CD14-positive monocyte (primary cell): ENCODE measurements at regions of chr17 and their contacts with region 1.

Region 1: DNA sequence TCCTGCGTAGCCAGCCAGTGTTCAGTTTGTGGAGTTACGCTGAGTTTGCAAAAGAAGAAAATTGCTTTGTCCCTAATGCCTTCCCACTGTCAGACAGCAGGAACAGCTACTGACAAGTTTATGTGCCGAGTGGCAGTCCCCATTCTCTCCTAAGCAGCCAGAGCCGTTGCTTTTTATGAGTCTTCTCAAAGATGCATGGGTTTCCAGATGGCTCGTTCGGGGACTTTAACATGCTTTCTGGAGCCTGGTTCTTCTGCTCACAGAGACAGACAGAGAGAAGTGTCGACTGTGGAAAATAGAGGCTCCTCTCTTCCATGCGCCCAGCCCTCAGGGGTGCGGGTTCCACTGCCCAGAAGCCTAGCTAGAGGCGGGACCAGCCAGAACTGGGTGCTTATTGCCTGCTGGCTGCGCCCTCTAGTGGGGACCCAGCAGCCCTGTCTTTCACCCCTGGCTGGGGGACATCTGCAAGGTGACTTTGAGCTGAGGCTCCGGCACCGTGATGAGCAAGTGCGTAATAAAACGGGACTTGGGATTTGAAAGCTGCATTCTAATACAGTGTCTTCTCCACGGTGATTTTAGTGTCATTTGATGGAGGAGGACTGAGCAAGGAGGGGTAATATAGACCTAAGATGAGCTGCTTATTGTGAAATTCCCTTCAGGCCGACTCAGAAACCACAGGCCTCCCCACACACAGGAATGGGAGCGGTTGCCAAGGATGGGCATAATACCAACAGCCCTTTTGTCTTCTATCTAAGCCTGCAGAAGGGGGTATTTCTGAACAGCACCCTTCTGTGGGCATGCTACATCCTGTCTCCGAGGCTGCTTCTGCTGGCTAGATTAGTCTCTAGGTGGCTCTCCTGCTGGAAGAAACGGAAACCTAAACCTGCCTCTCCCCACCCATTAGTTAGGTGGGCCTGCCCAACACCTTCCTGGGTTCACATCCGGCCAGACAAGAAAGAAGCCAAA is 73.1 kb downstream of the CCDC182 start:
- DNase-seq: peak; percentile 42 to 72 (median 65)
- H3K4me3 ChIP-seq: no peak overlapping the region
- H3K4me3 Mint-ChIP-seq: peak overlapping the region in 1 of 2 donors; percentile 60
- H3K27ac ChIP-seq: no peak overlapping the region
- H3K27ac Mint-ChIP-seq: no peak overlapping the region
- H3K4me1 ChIP-seq: peaks cover 6 to 10% of the 10 kb centered on the region in 2 donors
- H3K4me1 Mint-ChIP-seq: peaks cover 11% of the 10 kb centered on the region
- H3K27me3 ChIP-seq: no peaks in the 10 kb centered on the region
- H3K27me3 Mint-ChIP-seq: peaks cover 0 to 2% (median 0%) of the 10 kb centered on the region in 3 donors
- CTCF ChIP-seq: peak; percentile 94

Region 2: DNA sequence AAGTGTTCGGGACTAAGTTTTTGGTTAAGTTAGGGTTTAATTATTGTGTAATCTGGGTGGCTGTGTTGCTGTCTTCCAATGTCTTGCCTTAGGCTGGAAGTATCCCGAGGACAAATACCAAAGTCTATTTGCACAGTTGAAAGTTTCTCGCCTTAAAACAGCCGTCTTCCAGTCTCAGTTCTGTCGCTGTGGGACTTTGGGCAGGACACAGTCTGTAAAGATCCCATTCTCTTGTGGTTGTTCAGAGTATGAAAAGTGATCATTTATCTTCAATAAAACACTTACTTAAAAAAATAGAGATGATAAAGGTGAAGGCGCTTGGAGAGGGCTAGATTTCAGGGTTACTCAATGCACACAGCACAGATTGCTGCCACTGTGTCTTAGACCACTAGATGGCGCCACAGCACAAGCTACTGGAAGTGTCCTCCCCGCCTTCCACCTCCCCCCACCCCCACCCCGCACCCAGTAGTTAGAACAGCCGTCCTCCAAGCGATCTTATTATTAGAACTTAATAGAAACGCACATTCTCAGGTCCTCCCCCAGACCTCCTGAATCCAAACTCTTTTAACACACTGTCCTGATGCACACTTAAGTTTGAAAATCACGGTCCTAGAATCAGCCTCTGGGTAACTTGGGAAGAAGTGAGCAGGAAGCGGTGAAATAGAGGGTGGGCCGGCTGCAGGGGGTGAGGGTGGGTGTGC is 541.0 kb before region 1 on chr17:
- intact Hi-C with region 1: loop called in 1 of 2 experiments (anchors 10 kb)
- DNase-seq: peak; percentile 66 to 79 (median 76)
- H3K4me3 ChIP-seq: no peak overlapping the region
- H3K4me3 Mint-ChIP-seq: peak overlapping the region in 1 of 2 donors; percentile 26
- H3K27ac ChIP-seq: no peak overlapping the region
- H3K27ac Mint-ChIP-seq: peak overlapping the region in 1 of 7 donors; percentile 12
- H3K4me1 ChIP-seq: peaks cover 0 to 2% of the 10 kb centered on the region in 2 donors
- H3K4me1 Mint-ChIP-seq: peaks cover 6% of the 10 kb centered on the region
- H3K27me3 ChIP-seq: no peaks in the 10 kb centered on the region
- H3K27me3 Mint-ChIP-seq: peaks cover 3 to 11% (median 5%) of the 10 kb centered on the region in 3 donors
- CTCF ChIP-seq: peak; percentile 80

Region 3: DNA sequence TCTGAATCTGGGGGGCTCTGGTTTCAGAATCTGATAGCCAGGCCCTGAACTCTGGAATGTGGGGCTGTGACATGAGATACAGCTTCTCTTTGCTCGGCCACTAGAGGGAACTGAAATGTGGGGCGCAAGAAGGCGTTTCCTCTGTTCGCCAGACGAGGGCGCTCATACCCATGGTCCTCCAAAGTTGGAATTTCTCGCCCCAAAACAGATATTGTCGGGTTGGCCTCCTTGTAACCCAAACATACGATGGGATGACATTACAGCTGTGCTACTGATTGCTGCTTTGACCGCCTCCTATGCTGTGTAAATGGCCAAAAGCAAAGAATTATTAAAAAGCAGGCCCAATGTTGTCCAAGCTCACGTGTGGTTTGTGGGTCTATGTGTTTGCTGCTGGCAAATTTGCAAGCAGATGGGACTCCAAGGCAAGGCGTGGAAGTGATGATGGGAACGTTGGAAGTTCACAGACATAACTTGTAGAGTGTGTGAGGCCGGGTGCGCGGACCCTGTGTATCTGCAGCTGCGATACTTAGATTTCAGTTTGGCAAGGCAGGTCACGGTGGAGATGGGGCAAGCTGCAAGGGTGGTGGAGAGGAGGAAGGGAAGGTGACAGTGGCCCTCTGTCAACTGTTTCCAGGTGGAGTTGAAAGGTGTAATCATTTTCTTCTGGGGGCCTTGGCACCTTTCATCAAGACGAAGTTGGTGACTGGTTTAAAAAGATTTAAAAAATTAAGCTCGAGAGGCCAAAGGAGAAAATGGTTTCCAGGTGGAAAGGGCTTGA is 428.6 kb before region 1 on chr17:
- intact Hi-C with region 1: loop called in 1 of 2 experiments (anchors 5 kb)
- DNase-seq: peak; percentile 67 to 71 (median 70)
- H3K4me3 ChIP-seq: no peak overlapping the region
- H3K4me3 Mint-ChIP-seq: no peak overlapping the region
- H3K27ac ChIP-seq: no peak overlapping the region
- H3K27ac Mint-ChIP-seq: no peak overlapping the region
- H3K4me1 ChIP-seq: no peaks in the 10 kb centered on the region
- H3K4me1 Mint-ChIP-seq: peaks cover 1% of the 10 kb centered on the region
- H3K27me3 ChIP-seq: no peaks in the 10 kb centered on the region
- H3K27me3 Mint-ChIP-seq: peaks cover 0 to 6% (median 4%) of the 10 kb centered on the region in 3 donors
- CTCF ChIP-seq: peak; percentile 99

Region 4: GRCh38 chr17:57597531-57598453 is 74.2 kb before region 1 on chr17:
- intact Hi-C with region 1: loop called in 1 of 2 experiments (anchors 5 kb)
- DNase-seq: peak in 2 of 3 donors; percentile 48 to 55
- H3K4me3 ChIP-seq: no peak overlapping the region
- H3K4me3 Mint-ChIP-seq: no peak overlapping the region
- H3K27ac ChIP-seq: no peak overlapping the region
- H3K27ac Mint-ChIP-seq: peak overlapping the region in 1 of 7 donors; percentile 20
- H3K4me1 ChIP-seq: peaks cover 21 to 41% of the 10 kb centered on the region in 2 donors
- H3K4me1 Mint-ChIP-seq: peaks cover 47% of the 10 kb centered on the region
- H3K27me3 ChIP-seq: no peaks in the 10 kb centered on the region
- H3K27me3 Mint-ChIP-seq: peaks cover 0 to 5% (median 4%) of the 10 kb centered on the region in 3 donors
- CTCF ChIP-seq: peak; percentile 77

Region 5: DNA sequence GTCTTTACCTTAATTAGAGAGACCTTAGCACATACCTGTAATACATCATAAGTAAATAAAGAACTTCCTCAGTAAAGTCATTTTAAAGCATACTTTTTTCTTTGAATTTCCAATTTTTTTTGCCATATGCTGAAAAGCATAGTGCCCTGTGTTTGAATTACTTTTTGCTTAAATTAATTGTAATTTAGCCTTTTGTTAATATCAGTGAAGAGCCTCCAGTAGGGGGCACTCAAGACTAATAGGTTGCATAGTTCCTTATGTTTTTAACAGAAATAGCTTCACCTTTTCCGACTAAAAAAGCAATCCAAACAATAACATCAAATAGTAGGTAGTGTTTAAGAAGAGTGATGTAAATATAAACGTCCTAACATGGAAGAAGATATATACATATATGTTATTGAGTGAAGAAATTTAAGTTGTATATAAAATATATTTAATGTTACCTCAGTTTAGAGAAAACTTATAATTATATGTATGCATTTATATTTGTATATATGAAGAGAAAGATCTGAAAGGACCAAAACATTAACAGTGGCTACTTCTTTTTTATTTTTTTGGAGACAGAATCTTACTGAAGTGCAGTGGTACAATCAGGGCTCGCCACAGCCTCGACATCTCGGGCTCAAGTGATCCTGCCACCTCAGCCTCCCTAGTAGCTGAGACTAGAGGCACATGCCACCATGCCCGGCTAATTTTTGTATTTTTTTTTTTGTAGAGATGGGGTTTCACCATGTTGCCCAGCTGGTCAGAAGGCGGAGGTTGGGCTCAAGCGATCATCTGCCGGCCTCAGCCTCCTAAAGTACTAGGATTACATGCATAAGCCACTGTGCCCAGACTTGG is 1039.2 kb after region 1 on chr17:
- intact Hi-C with region 1: no loop called
- DNase-seq: peak; percentile 35 to 73 (median 53)
- H3K4me3 ChIP-seq: no peak overlapping the region
- H3K4me3 Mint-ChIP-seq: no peak overlapping the region
- H3K27ac ChIP-seq: peak overlapping the region in 1 of 2 donors; percentile 23
- H3K27ac Mint-ChIP-seq: no peak overlapping the region
- H3K4me1 ChIP-seq: no peaks in the 10 kb centered on the region
- H3K4me1 Mint-ChIP-seq: peaks cover 5% of the 10 kb centered on the region
- H3K27me3 ChIP-seq: no peaks in the 10 kb centered on the region
- H3K27me3 Mint-ChIP-seq: no peaks in the 10 kb centered on the region
- CTCF ChIP-seq: peak; percentile 93